ENCODE measurements at regions of chr3 and their contacts with region 1.

Region 1: DNA sequence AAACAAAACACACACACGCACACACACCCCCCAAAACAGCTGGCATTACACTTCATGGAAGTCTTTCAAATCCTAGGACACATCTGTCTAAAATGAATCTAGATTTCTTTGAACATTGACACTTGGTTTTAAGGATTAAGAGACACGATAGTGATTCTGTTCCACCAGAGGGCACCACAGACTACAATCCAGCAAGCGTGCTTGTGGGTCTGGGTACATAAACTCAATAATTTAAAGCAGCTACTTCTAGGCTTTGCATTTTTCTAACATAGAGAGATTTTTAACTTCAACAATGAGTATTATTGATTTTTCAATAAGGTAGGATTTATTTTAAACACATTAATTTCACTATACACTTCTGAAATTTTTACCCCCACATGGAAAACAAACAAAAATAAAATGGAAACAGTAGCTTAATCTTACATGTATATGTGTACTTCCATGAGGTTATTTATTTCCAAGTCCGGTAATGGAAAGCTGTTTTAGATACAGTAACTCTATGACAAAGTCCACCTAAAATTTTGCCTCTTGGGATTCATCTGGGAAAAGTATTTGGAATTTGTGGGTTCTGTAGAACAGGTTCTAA is 564.0 kb upstream of the TGFBR2 start:
- DNase-seq: peak; percentile 78
- ATAC-seq: no peak
- H3K4me3 Mint-ChIP-seq: no peak overlapping the region
- H3K27ac Mint-ChIP-seq: no peak overlapping the region
- H3K4me1 Mint-ChIP-seq: no peaks in the 10 kb centered on the region
- H3K27me3 Mint-ChIP-seq: peaks cover 28% of the 10 kb centered on the region
- CTCF ChIP-seq: peak; percentile 66

Region 2: GRCh38 chr3:29677421-29677820 is 364.9 kb before region 1 on chr3:
- CTCF ChIA-PET with region 1: no interaction called
- POLR2A ChIA-PET with region 1: no interaction called
- intact Hi-C with region 1: no loop called
- DNase-seq: no peak
- ATAC-seq: no peak
- H3K4me3 Mint-ChIP-seq: no peak overlapping the region
- H3K27ac Mint-ChIP-seq: no peak overlapping the region
- H3K4me1 Mint-ChIP-seq: no peaks in the 10 kb centered on the region
- H3K27me3 Mint-ChIP-seq: no peaks in the 10 kb centered on the region
- CTCF ChIP-seq: no peak

Region 3: GRCh38 chr3:30012941-30013543 is 29.3 kb before region 1 on chr3:
- CTCF ChIA-PET with region 1: interaction called, 12 read pairs
- POLR2A ChIA-PET with region 1: no interaction called
- intact Hi-C with region 1: no loop called
- DNase-seq: peak; percentile 74
- ATAC-seq: no peak
- H3K4me3 Mint-ChIP-seq: no peak overlapping the region
- H3K27ac Mint-ChIP-seq: no peak overlapping the region
- H3K4me1 Mint-ChIP-seq: peaks cover 6% of the 10 kb centered on the region
- H3K27me3 Mint-ChIP-seq: peaks cover 9% of the 10 kb centered on the region
- CTCF ChIP-seq: peak; percentile 78

Region 4: GRCh38 chr3:30030735-30031134 is 11.6 kb before region 1 on chr3:
- CTCF ChIA-PET with region 1: interaction called, 22 read pairs
- POLR2A ChIA-PET with region 1: no interaction called
- intact Hi-C with region 1: no loop called
- DNase-seq: no peak
- ATAC-seq: no peak
- H3K4me3 Mint-ChIP-seq: no peak overlapping the region
- H3K27ac Mint-ChIP-seq: no peak overlapping the region
- H3K4me1 Mint-ChIP-seq: no peaks in the 10 kb centered on the region
- H3K27me3 Mint-ChIP-seq: peaks cover 14% of the 10 kb centered on the region
- CTCF ChIP-seq: no peak

Region 5: DNA sequence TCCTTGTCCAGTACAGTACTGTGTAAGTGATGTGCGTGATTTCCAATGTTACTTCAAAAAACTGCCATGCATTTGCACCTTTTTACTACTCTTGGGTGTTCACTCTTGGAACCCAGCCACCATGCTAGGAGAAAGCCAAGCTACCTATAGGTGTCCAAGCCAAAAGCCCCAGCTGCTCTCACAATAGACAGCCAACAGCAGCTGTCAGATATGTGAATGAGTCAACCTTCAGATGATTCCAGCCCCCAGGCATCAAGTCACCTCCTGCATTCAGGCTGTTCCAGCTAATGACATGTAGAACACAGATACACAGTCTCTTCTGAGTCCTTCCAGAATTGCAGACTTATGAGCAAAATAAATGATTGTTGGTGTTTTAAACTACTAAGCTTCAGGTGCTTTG is 146.3 kb after region 1 on chr3:
- CTCF ChIA-PET with region 1: interaction called, 17 read pairs
- POLR2A ChIA-PET with region 1: no interaction called
- intact Hi-C with region 1: no loop called
- DNase-seq: no peak
- ATAC-seq: no peak
- H3K4me3 Mint-ChIP-seq: no peak overlapping the region
- H3K27ac Mint-ChIP-seq: no peak overlapping the region
- H3K4me1 Mint-ChIP-seq: no peaks in the 10 kb centered on the region
- H3K27me3 Mint-ChIP-seq: peaks cover 11% of the 10 kb centered on the region
- CTCF ChIP-seq: no peak

Region 6: DNA sequence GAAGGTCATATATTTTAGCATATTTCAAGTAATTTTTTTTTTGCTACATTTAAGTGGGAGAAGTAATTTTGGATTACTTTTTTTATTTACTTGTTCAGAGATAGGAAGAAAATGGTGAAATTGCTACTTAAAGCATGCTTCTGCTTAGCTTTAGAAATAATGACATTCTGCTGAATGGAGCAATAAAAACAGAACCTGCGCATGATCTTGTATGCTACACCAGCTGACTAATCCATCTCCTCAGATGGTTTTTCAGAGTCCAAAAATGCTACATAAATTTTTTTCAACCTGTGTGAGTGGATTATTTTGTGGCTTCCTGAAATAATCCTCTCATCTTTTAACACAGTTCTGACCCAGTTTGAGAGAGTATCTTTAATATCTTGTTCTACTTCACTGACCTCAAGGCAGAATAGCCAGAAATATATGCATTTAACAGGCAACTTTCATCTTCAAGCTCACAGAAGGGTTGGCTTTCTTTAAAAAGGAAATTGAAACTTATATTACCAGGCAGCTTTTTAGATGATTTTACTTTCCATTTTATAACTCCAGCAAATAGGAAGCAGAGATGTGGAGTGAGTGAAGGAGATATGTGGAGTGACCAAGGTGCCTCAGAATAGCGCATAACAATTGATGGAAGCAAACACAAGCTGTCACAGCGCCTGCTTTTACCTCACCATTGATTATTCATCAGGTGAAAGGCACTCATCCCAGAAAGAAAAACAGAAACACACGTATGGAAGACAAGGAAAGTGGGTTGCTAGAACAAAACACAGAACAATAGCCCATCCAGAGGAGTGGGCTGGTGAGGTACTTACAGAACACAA is 700.6 kb after region 1 on chr3:
- CTCF ChIA-PET with region 1: interaction called, 58 read pairs
- POLR2A ChIA-PET with region 1: no interaction called
- intact Hi-C with region 1: loop called (anchors 2 kb)
- DNase-seq: no peak
- ATAC-seq: no peak
- H3K4me3 Mint-ChIP-seq: no peak overlapping the region
- H3K27ac Mint-ChIP-seq: peak overlapping the region; percentile 55
- H3K4me1 Mint-ChIP-seq: peaks cover 32% of the 10 kb centered on the region
- H3K27me3 Mint-ChIP-seq: no peaks in the 10 kb centered on the region
- CTCF ChIP-seq: no peak

Region 7: DNA sequence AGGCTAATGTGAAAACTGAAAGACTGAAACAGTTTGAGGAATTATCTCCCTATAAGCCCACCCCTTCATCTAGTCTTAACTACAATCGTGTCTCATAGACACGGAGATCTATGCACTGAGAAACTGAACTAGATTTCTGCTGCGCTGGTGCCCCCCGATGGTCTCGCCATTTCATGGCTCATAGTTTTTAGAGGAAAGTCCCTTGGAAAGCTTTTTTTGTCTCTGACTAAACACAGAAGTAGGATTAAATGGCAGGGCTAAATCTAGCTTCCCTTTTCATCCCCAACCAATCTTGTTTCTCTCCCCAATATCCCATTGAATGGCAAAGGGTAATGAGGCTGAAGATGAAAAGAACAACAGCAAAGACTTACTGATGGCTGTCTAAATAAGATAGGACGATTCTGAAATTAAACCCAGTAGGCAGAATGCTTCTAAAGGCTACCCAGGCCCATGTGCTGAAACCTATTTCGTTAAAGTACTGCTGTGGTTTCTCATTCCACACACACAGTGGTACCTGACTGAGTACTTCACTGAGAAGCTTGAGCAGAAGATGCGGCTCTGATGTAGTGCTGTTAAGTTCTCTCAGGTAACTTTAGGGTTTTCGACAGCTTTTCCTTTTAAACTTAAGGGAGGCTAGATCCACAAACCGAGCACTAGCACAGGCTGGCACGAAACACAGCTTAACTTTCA is 709.4 kb after region 1 on chr3:
- CTCF ChIA-PET with region 1: interaction called, 58 read pairs
- POLR2A ChIA-PET with region 1: no interaction called
- intact Hi-C with region 1: loop called (anchors 2 kb)
- DNase-seq: peak; percentile 83
- ATAC-seq: peak; percentile 69
- H3K4me3 Mint-ChIP-seq: no peak overlapping the region
- H3K27ac Mint-ChIP-seq: peak overlapping the region; percentile 44
- H3K4me1 Mint-ChIP-seq: peaks cover 44% of the 10 kb centered on the region
- H3K27me3 Mint-ChIP-seq: peaks cover 2% of the 10 kb centered on the region
- CTCF ChIP-seq: peak; percentile 75

Measured in activated CD8-positive, alpha-beta T cell treated with anti-CD3 and anti-CD28 coated beads for 36 hours (primary cell).